ENCODE measurements at regions of chr3 and their contacts with region 1.

Region 1: DNA sequence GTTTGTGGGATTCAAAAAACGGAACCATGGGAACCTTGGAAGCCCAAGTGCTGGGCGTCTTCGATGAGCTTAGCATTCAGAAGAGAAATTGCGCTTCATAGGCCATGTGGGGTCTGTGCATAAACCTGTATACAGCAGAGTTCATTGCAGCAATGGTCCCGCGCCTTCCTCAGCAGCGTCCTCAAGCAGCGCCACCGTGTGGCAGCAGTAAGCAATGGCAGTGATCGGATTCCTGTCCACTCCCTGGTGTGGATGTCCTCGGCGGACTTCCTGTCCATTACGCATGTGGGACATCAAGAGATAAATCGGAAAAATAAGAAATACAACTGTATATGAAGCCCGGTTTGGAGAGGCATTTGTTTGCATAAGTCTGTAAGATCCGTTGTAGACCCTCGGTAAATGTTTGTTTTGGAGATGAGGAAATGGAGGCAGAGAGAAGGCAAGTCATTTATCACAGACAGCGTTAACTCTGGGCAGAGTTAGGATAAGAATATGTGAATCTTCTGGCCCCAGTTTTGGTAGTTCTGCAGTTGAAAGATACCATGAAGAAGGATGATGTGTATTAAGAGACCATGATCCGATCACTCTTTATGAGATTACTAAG is 57.7 kb downstream of the CNTN4 start:
- DNase-seq: peak; percentile 46
- ATAC-seq: no peak
- H3K4me3 Mint-ChIP-seq: no peak overlapping the region
- H3K27ac Mint-ChIP-seq: no peak overlapping the region
- H3K4me1 Mint-ChIP-seq: no peaks in the 10 kb centered on the region
- H3K27me3 Mint-ChIP-seq: peaks cover 4% of the 10 kb centered on the region

Region 2: GRCh38 chr3:632572-633170 is 1523.7 kb before region 1 on chr3:
- CTCF ChIA-PET with region 1: no interaction called
- POLR2A ChIA-PET with region 1: no interaction called
- intact Hi-C with region 1: loop called in 1 of 2 experiments (anchors 5 kb)
- DNase-seq: peak; percentile 64
- ATAC-seq: peak; percentile 47
- H3K4me3 Mint-ChIP-seq: no peak overlapping the region
- H3K27ac Mint-ChIP-seq: no peak overlapping the region
- H3K4me1 Mint-ChIP-seq: no peaks in the 10 kb centered on the region
- H3K27me3 Mint-ChIP-seq: no peaks in the 10 kb centered on the region

Region 3: DNA sequence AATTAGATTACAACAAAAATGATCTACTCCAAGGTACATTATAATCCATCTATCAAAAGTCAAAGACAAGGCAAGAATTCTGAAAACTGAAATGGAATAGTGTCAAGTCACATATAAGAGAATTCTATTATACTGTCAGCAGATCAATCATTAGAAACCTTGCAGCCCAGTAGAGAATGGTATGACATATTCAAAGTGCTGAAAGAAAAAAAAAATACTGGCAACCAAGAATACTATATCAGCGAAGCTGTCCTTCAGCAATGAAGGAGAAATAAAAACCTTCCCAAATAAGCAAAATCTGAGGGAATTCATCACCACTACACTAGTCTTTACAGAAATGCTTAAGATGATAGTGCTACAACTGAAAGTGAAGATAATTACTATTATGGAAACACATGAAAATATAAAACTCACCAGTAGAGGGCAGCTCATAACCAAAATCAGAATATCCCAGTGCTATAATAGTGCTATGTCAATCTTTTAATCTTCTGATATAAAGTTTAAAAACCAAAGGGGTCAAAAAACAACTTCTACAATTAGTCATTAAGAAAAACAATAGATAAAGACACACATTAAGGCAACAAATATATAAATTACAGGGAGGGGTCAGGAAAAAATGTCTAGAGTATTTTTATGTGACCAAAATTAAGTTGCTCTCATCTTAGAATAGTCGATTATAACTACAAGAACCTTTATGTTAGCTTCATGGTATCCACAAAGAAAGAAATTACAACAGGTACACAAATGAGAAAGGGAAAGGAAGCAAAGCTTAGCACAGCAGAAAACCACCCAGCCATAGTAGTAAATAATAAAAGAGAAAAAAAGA is 1254.2 kb before region 1 on chr3:
- CTCF ChIA-PET with region 1: no interaction called
- POLR2A ChIA-PET with region 1: no interaction called
- intact Hi-C with region 1: loop called in 1 of 2 experiments (anchors 2 kb)
- DNase-seq: no peak
- ATAC-seq: no peak
- H3K4me3 Mint-ChIP-seq: no peak overlapping the region
- H3K27ac Mint-ChIP-seq: no peak overlapping the region
- H3K4me1 Mint-ChIP-seq: no peaks in the 10 kb centered on the region
- H3K27me3 Mint-ChIP-seq: no peaks in the 10 kb centered on the region

Region 4: GRCh38 chr3:1007866-1008265 is 1148.5 kb before region 1 on chr3:
- CTCF ChIA-PET with region 1: no interaction called
- POLR2A ChIA-PET with region 1: no interaction called
- intact Hi-C with region 1: no loop called
- DNase-seq: no peak
- ATAC-seq: no peak
- H3K4me3 Mint-ChIP-seq: no peak overlapping the region
- H3K27ac Mint-ChIP-seq: no peak overlapping the region
- H3K4me1 Mint-ChIP-seq: no peaks in the 10 kb centered on the region
- H3K27me3 Mint-ChIP-seq: no peaks in the 10 kb centered on the region

Region 5: GRCh38 chr3:2354702-2355101 is 198.4 kb after region 1 on chr3:
- CTCF ChIA-PET with region 1: no interaction called
- POLR2A ChIA-PET with region 1: no interaction called
- intact Hi-C with region 1: no loop called
- DNase-seq: no peak
- ATAC-seq: no peak
- H3K4me3 Mint-ChIP-seq: no peak overlapping the region
- H3K27ac Mint-ChIP-seq: no peak overlapping the region
- H3K4me1 Mint-ChIP-seq: no peaks in the 10 kb centered on the region
- H3K27me3 Mint-ChIP-seq: no peaks in the 10 kb centered on the region